ENCODE measurements at regions of chr14 and their contacts with region 1.

Region 1: GRCh38 chr14:74368846-74369245 is 20.6 kb downstream of the VRTN start:
- DNase-seq: no peak
- H3K4me3 ChIP-seq: no peak overlapping the region
- H3K27ac ChIP-seq: no peak overlapping the region
- H3K4me1 ChIP-seq: no peaks in the 10 kb centered on the region
- H3K27me3 ChIP-seq: peaks cover 15% of the 10 kb centered on the region

Region 2: GRCh38 chr14:74478996-74479635 is 110.3 kb after region 1 on chr14:
- in situ Hi-C with region 1: loop called (anchors 5 kb)
- DNase-seq: peak; percentile 56
- H3K4me3 ChIP-seq: no peak overlapping the region
- H3K27ac ChIP-seq: no peak overlapping the region
- H3K4me1 ChIP-seq: peaks cover 26% of the 10 kb centered on the region
- H3K27me3 ChIP-seq: no peaks in the 10 kb centered on the region

Measured in GM23248 (cell line).